Adrenal gland (tissue), 19 donors: ENCODE measurements at regions of chr2 and their contacts with region 1.

Region 1: GRCh38 chr2:149597668-149598326 is 10.2 kb upstream of the MMADHC start:
- DNase-seq: peak; percentile 38 to 71 (median 52)
- H3K4me3 ChIP-seq: peak overlapping the region in 1 of 4 donors; percentile 15
- H3K27ac ChIP-seq: no peak overlapping the region
- H3K4me1 ChIP-seq: peaks cover 0 to 5% of the 10 kb centered on the region in 2 donors
- H3K27me3 ChIP-seq: no peaks in the 10 kb centered on the region
- CTCF ChIP-seq: peak; percentile 74 to 93 (median 88)
- POLR2A ChIP-seq: no peak

Region 2: GRCh38 chr2:149451417-149452109 is 146.2 kb before region 1 on chr2:
- intact Hi-C with region 1: no loop called
- DNase-seq: no peak
- H3K4me3 ChIP-seq: no peak overlapping the region
- H3K27ac ChIP-seq: no peak overlapping the region
- H3K4me1 ChIP-seq: no peaks in the 10 kb centered on the region
- H3K27me3 ChIP-seq: no peaks in the 10 kb centered on the region
- CTCF ChIP-seq: no peak
- POLR2A ChIP-seq: no peak

Region 3: DNA sequence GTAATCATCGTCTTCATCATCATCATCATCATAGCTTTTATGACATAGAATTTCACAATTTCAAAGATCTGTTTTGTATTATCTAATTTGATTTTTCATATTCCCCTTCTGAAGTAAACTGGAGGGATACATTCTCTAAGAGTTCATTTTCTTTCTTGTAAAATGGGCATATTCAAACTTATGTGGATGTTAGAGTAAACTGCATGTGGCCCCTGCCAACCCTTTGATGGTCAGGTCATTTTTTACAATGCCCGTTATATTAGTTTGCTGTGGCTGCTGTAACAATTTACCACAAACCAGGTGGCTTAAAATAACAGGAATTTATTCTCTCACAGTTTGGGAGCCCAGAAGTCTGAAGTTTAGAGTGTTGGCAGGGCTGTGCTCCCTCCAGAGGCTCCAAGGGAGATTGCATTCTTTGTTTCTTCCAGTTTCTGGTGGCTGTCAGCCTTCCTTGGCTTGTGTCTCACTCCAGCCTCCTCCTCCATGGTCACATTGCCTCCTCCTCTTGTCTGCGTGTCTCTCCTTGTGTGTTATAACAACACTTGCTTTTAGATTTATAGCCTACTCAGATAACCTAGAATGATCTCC is 117.3 kb after region 1 on chr2:
- intact Hi-C with region 1: loop called in 1 of 2 experiments (anchors 10 kb)
- DNase-seq: peak in 4 of 7 donors; percentile 19 to 34 (median 27)
- H3K4me3 ChIP-seq: no peak overlapping the region
- H3K27ac ChIP-seq: no peak overlapping the region
- H3K4me1 ChIP-seq: no peaks in the 10 kb centered on the region
- H3K27me3 ChIP-seq: no peaks in the 10 kb centered on the region
- CTCF ChIP-seq: peak; percentile 23 to 56 (median 37)
- POLR2A ChIP-seq: no peak

Region 4: GRCh38 chr2:149908726-149909683 is 311.2 kb after region 1 on chr2:
- intact Hi-C with region 1: no loop called
- DNase-seq: no peak
- H3K4me3 ChIP-seq: no peak overlapping the region
- H3K27ac ChIP-seq: no peak overlapping the region
- H3K4me1 ChIP-seq: no peaks in the 10 kb centered on the region
- H3K27me3 ChIP-seq: no peaks in the 10 kb centered on the region
- CTCF ChIP-seq: no peak
- POLR2A ChIP-seq: no peak

Region 5: GRCh38 chr2:150487537-150488429 is 890.0 kb after region 1 on chr2 and contains the start of gene RND3:
- intact Hi-C with region 1: loop called in 1 of 2 experiments (anchors 5 kb)
- DNase-seq: peak; percentile 96 to 99 (median 99)
- H3K4me3 ChIP-seq: peak within 1 kb of the TSS; percentile 57 to 88 (median 68)
- H3K27ac ChIP-seq: peak within 1 kb of the TSS; percentile 67 to 95 (median 91)
- H3K4me1 ChIP-seq: peaks cover 19 to 21% of the 10 kb centered on the region in 2 donors
- H3K27me3 ChIP-seq: no peaks in the 10 kb centered on the region
- CTCF ChIP-seq: peak; percentile 81 to 94 (median 86)
- POLR2A ChIP-seq: peak; percentile 96 to 98
- total RNA-seq, gene RND3: 25.3 to 118 (median 57.3) TPM

Region 6: GRCh38 chr2:151238527-151239487 is 1641.0 kb after region 1 on chr2:
- intact Hi-C with region 1: loop called (anchors 5 to 10 kb)
- DNase-seq: peak; percentile 47 to 84 (median 74)
- H3K4me3 ChIP-seq: no peak overlapping the region
- H3K27ac ChIP-seq: peak overlapping the region in 1 of 5 donors; percentile 28
- H3K4me1 ChIP-seq: peaks cover 4 to 12% of the 10 kb centered on the region in 2 donors
- H3K27me3 ChIP-seq: no peaks in the 10 kb centered on the region
- CTCF ChIP-seq: peak; percentile 77 to 96 (median 93)
- POLR2A ChIP-seq: no peak